Vagina (tissue), 2 donors: ENCODE measurements at regions of chr21 and their contacts with region 1.

Region 1: GRCh38 chr21:41167348-41168342 is at the start of gene BACE2:
- DNase-seq: no peak
- H3K4me3 ChIP-seq: peak within 1 kb of the TSS; percentile 91 to 93
- H3K27ac ChIP-seq: peak within 1 kb of the TSS; percentile 98
- H3K4me1 ChIP-seq: peaks cover 39% of the 10 kb centered on the region
- H3K27me3 ChIP-seq: no peaks in the 10 kb centered on the region
- CTCF ChIP-seq: peak; percentile 43 to 64 (median 48)
- POLR2A ChIP-seq: peak in 1 of 2 donors; percentile 33
- total RNA-seq, gene BACE2: 43.7 TPM

Region 2: GRCh38 chr21:41207401-41208068 is 39.9 kb after region 1 on chr21:
- intact Hi-C with region 1: loop called (anchors 5 kb)
- DNase-seq: no peak
- H3K4me3 ChIP-seq: no peak overlapping the region
- H3K27ac ChIP-seq: no peak overlapping the region
- H3K4me1 ChIP-seq: peaks cover 3% of the 10 kb centered on the region
- H3K27me3 ChIP-seq: no peaks in the 10 kb centered on the region
- CTCF ChIP-seq: no peak
- POLR2A ChIP-seq: no peak